OCI-LY7 (cell line): ENCODE measurements at regions of chr17 and their contacts with region 1.

Region 1: DNA sequence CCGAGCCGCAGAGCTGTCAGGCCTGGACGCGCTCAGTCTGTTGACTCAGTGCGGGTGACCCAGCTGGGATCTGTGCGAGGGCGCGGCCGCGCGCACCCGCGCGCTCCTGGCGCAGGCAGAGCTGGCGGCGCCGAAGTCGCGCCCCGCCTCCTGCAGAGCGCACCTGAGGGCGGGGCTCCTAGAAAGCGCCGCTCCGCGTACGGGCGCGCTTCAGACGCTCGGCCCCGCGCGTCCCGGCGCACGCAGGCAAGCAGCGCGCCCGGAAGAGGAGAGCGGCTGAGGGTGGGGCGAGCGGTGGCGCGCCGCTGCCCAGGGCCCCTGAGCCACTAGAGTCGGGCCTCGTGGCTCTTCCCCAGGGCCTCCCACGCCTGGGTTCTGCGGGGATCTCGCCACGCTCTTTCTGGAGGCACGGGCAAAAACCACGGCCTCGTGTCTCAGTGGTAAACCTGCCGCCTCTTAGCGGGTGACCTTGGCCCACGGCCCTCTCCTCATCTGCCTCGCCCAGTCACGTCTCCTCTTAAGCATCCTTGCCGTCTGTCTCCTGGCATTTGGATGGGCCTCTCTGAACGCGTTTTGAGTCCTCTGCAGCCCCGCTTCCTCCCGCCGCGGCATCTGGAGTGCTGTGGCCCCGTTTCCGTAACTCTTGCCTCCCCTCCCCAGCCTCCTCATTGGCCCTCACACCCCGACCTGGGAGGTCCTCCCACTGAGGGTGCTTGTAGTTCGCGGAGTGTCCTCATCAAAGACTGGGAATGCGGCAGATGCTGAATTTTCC is at the start of gene ABCA5:
- DNase-seq: peak; percentile 98
- H3K4me3 ChIP-seq: peak within 1 kb of the TSS; percentile 73
- H3K27ac ChIP-seq: no peak within 1 kb of the TSS
- H3K4me1 ChIP-seq: peaks cover 16% of the 10 kb centered on the region
- CTCF ChIP-seq: no peak
- total RNA-seq, gene ABCA5: 14.7 and 15.1 TPM in 2 replicates

Region 2: DNA sequence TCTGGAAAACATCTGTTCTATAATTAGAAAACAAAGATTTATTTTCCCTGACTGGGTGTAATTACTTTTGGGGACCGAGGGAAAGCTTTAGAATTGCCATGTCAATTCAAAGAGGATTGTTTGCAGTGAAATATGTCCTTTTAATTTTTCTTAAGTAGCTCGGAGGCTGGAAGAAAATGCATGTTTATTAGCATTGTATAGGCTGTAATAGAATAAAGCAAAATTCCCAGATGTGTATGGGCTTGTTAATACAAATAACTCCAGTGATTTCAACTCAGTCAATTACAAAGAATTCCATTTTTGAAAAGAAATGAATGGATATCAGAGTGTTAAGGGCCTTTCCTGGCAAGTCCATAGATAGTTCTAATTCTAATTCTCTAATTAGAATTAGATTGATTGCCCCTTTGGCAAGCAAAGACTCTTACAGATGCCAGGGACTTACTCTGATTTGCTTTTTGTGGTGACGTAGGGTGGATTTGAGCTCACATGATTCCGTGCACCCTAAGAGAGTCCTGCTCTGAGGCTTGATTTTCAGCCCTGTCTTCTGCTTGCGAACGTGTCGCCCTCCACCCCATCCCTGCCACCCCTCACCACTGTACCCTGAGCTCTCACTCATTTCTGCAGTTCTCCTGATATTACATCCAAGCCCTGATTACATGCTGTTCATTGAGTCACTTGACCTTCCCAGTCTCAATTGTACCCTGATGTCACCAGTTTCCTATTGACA is 656.1 kb before region 1 on chr17:
- CTCF ChIA-PET with region 1: interaction called, 15 read pairs
- POLR2A ChIA-PET with region 1: no interaction called
- intact Hi-C with region 1: no loop called
- DNase-seq: no peak
- H3K4me3 ChIP-seq: no peak overlapping the region
- H3K27ac ChIP-seq: no peak overlapping the region
- H3K4me1 ChIP-seq: no peaks in the 10 kb centered on the region
- CTCF ChIP-seq: no peak

Region 3: GRCh38 chr17:69103557-69104233 is 223.6 kb before region 1 on chr17:
- CTCF ChIA-PET with region 1: no interaction called
- POLR2A ChIA-PET with region 1: no interaction called
- intact Hi-C with region 1: no loop called
- DNase-seq: no peak
- H3K4me3 ChIP-seq: no peak overlapping the region
- H3K27ac ChIP-seq: no peak overlapping the region
- H3K4me1 ChIP-seq: peaks cover under 1% of the 10 kb centered on the region
- CTCF ChIP-seq: no peak

Region 4: DNA sequence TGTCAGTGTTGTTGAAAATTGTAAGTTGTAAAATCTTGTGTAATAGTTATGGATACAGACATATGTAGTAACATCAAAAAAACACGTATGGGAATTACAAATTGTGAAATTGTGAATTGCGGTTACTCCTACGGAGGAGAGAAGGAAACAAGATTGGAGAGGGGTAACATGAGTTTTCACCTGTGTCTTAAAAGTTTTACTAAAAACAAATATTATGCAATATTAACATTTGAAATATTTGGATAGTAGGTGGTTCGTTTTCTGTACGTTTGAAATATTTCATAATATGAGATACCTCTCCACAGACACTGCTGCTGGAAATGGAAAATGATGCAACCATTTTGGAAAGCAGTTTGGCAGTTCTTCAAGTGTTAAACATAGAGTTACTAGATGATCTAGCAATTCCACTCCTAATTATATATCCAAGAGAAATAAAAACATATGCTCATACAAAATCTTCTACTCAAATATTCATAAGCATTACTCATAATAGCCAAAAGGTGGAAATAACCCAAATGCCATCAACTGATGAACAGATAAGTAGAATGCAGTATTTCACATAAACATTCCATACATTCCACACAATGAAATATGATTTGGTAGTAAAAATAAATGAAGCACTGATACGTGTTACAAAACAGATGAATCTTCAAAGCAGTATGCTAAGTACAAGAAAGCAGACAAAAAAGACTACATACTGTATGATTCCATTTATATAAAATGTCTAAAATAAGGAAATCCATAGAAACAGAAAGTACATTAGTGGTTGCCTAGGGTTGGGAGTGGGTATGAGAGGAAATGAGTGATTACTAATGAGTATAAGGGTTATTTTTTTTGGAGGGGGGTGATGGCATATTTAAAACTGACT is 57.9 kb before region 1 on chr17:
- CTCF ChIA-PET with region 1: no interaction called
- POLR2A ChIA-PET with region 1: no interaction called
- intact Hi-C with region 1: no loop called
- DNase-seq: no peak
- H3K4me3 ChIP-seq: no peak overlapping the region
- H3K27ac ChIP-seq: no peak overlapping the region
- H3K4me1 ChIP-seq: no peaks in the 10 kb centered on the region
- CTCF ChIP-seq: no peak

Region 5: GRCh38 chr17:70168977-70169708 is 841.9 kb after region 1 on chr17 and contains the start of gene KCNJ2:
- CTCF ChIA-PET with region 1: no interaction called
- POLR2A ChIA-PET with region 1: no interaction called
- intact Hi-C with region 1: loop called (anchors 10 kb)
- DNase-seq: peak; percentile 87
- H3K4me3 ChIP-seq: peak within 1 kb of the TSS; percentile 61
- H3K27ac ChIP-seq: no peak within 1 kb of the TSS
- H3K4me1 ChIP-seq: peaks cover 14% of the 10 kb centered on the region
- CTCF ChIP-seq: no peak
- total RNA-seq, gene KCNJ2: 0.46 and 0.88 TPM in 2 replicates